ENCODE measurements at regions of chr2 and their contacts with region 1.

Region 1: GRCh38 chr2:205766779-205767359 is 84.6 kb downstream of the NRP2 start:
- DNase-seq: peak; percentile 84
- H3K4me3 Mint-ChIP-seq: no peak overlapping the region
- H3K27ac Mint-ChIP-seq: no peak overlapping the region
- H3K4me1 Mint-ChIP-seq: peaks cover 4% of the 10 kb centered on the region
- H3K27me3 Mint-ChIP-seq: peaks cover 21% of the 10 kb centered on the region

Region 2: DNA sequence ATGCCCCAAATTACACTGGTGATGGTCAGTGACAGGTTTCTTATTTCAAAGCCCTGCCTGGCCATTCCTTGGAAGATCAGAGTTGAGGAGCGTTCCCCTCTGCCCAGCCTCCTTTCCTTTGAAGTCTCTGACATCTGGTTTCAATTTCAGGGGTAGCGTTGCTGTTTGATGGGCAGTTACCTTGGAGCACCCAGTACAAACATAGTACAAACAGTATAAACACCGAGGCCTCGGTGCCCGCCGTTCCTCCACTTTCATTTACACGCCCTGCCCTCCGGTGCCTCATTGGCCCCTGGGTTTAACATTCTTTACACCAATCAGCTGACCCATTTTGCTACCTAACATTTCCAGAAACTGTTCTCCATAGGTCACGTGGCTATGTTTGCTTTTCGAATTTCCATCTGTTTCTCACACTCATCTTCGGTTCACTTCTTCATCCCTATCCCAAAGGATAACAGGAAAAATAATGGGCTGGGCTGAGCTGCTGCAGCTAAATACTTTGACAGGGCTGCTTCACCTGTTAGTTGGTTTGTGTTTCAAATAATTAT is 19.0 kb before region 1 on chr2:
- intact Hi-C with region 1: loop called (anchors 1 kb)
- DNase-seq: no peak
- H3K4me3 Mint-ChIP-seq: no peak overlapping the region
- H3K27ac Mint-ChIP-seq: no peak overlapping the region
- H3K4me1 Mint-ChIP-seq: no peaks in the 10 kb centered on the region
- H3K27me3 Mint-ChIP-seq: peaks cover 3% of the 10 kb centered on the region

Region 3: DNA sequence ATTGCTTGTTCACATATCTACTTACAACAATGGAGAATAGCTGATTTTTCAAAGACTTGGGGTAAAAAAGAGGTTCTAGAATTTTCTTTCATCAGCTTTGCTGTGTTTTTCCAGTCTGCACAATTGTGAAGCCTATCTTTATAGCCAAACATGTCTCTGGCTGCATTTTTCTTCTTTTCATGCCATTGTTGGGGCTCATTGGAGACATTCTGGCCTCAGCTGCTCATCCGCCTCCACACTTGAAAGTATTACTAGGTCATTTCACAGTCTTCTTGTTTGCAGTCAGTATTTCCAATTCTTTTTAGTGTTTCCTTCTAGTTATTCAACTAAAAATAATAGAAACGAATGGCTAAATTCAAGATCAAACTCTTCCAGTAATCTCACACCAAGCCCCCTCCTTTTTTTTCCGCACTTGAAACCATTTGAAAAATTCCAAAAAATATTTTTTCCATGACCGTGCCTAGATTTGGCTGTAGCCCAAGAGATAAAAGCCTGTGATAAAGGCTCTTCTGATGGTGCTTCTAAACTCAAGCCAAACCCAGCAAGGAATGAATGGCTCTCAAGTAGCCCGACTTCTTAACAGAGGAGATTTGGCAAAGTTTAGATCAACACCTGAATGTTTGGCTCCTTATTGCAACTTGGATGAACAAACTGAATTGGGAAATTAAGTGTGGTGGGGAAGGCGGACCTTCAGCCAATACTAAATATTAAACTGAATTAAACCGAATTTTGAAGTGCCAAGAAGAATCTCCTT is 18.8 kb after region 1 on chr2:
- intact Hi-C with region 1: no loop called
- DNase-seq: no peak
- H3K4me3 Mint-ChIP-seq: no peak overlapping the region
- H3K27ac Mint-ChIP-seq: no peak overlapping the region
- H3K4me1 Mint-ChIP-seq: peaks cover 2% of the 10 kb centered on the region
- H3K27me3 Mint-ChIP-seq: peaks cover 2% of the 10 kb centered on the region

Region 4: DNA sequence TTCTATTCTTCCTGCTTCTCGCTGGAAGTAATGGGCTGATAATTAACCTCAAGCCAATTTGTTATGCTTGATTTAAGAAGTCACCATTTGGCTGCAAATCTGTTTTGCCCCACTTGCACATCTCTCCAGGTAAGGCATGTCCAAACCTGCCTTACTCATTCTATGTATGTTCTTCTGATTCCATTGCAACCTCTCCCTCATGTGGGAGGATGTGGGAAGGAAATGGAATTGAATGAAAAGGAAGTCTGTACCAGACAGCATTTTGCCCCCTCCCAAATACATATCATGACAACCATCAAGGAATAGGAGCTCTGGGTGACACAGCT is 47.1 kb after region 1 on chr2:
- intact Hi-C with region 1: loop called (anchors 5 kb)
- DNase-seq: no peak
- H3K4me3 Mint-ChIP-seq: no peak overlapping the region
- H3K27ac Mint-ChIP-seq: no peak overlapping the region
- H3K4me1 Mint-ChIP-seq: no peaks in the 10 kb centered on the region
- H3K27me3 Mint-ChIP-seq: peaks cover 18% of the 10 kb centered on the region

Region 5: DNA sequence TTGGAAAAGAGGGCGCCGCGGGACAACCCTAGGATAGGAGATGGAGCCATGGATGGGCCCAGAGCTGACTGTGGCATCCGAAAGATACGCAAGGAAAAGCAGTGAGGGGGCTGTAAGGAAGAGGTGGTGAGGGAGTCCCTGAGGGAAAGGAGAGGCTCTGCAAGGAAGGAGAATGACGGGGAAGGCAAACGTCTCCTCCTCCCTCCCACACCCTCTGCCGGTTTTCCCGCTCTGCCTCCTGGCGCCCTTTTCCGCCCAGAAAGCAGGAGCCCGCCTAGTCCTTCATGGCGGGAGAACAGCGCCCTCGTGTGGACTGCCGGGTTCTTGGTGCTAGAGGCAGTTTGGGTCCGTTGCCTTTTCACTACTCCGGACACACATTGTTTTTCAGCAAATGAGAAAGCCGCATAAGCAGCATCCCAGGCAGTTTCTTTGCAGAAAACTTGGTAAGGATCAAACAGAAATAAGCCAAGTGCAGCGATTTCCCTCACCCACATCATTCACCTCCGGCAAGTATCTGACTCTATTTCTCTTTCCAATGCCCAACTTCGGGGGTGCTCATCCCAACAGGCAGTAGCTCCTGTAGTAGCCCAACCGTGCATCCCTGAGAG is 118.7 kb after region 1 on chr2:
- intact Hi-C with region 1: loop called (anchors 2 kb)
- DNase-seq: peak; percentile 90
- H3K4me3 Mint-ChIP-seq: no peak overlapping the region
- H3K27ac Mint-ChIP-seq: no peak overlapping the region
- H3K4me1 Mint-ChIP-seq: peaks cover 2% of the 10 kb centered on the region
- H3K27me3 Mint-ChIP-seq: peaks cover 9% of the 10 kb centered on the region

Region 6: GRCh38 chr2:205925373-205926337 is 158.8 kb after region 1 on chr2:
- intact Hi-C with region 1: loop called (anchors 2 kb)
- DNase-seq: peak; percentile 90
- H3K4me3 Mint-ChIP-seq: peak overlapping the region; percentile 47
- H3K27ac Mint-ChIP-seq: no peak overlapping the region
- H3K4me1 Mint-ChIP-seq: peaks cover 9% of the 10 kb centered on the region
- H3K27me3 Mint-ChIP-seq: peaks cover 38% of the 10 kb centered on the region